Breast epithelium (tissue), 4 donors: ENCODE measurements at regions of chr7 and their contacts with region 1.

Region 1: DNA sequence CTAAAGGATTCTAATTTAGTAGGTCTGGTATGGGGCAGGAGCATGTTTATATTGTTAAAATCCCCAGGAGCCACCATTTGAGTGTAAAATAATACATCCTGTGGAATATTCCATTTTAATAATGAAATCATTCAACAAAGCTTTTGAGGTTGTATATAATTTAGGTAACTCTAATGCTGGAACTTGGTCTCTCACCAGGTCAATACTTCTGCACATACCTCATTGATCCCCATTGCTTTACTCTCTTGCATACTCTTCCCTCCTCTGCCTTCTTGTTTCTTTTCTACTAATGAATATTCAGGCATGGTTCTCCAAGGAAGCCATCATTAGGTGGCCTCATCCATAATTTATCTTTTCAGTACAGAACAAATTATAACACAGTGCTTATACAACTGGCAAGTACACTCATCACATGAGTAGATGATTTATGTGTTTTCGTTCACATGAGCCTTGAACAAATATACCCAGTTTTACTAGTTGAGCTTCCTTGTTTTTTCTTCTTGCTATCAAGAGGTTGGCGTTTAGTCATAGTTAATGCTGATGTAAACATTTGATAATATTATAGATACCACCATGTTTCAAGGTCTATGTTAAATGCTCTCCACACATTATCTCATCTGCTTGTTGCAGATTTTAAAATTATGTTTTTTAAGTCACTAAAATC is 7.2 kb downstream of the PALS2 start:
- DNase-seq: no peak
- H3K4me3 ChIP-seq: no peak overlapping the region
- H3K27ac ChIP-seq: no peak overlapping the region
- H3K4me1 ChIP-seq: no peaks in the 10 kb centered on the region
- H3K27me3 ChIP-seq: no peaks in the 10 kb centered on the region
- CTCF ChIP-seq: no peak
- POLR2A ChIP-seq: no peak

Region 2: GRCh38 chr7:24108906-24109376 is 471.5 kb before region 1 on chr7:
- intact Hi-C with region 1: no loop called
- DNase-seq: no peak
- H3K4me3 ChIP-seq: no peak overlapping the region
- H3K27ac ChIP-seq: no peak overlapping the region
- H3K4me1 ChIP-seq: no peaks in the 10 kb centered on the region
- H3K27me3 ChIP-seq: no peaks in the 10 kb centered on the region
- CTCF ChIP-seq: no peak
- POLR2A ChIP-seq: no peak

Region 3: DNA sequence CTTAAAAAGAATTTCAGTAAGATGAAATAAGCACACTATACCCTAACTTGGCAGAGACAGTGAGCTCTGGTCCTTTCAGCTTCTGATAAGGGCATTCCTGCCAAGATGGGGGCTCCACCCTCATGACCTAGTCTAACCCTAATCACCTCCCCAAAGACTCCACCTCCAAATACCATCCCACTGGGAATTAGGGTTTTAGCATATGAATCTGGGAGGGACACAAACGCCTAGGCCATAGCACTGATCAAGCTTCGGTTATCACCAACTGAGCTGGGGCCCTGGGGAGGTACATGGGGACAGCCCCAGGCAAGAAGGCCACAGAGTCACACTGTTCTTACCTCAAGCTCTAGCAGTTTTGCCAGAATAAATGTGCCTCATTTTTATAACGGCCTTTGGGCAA is 24.2 kb after region 1 on chr7:
- intact Hi-C with region 1: loop called (anchors 2 kb)
- DNase-seq: no peak
- H3K4me3 ChIP-seq: no peak overlapping the region
- H3K27ac ChIP-seq: no peak overlapping the region
- H3K4me1 ChIP-seq: no peaks in the 10 kb centered on the region
- H3K27me3 ChIP-seq: no peaks in the 10 kb centered on the region
- CTCF ChIP-seq: no peak
- POLR2A ChIP-seq: no peak